Heart right ventricle (tissue), 16 donors: ENCODE measurements at regions of chr6 and their contacts with region 1.

Region 1: DNA sequence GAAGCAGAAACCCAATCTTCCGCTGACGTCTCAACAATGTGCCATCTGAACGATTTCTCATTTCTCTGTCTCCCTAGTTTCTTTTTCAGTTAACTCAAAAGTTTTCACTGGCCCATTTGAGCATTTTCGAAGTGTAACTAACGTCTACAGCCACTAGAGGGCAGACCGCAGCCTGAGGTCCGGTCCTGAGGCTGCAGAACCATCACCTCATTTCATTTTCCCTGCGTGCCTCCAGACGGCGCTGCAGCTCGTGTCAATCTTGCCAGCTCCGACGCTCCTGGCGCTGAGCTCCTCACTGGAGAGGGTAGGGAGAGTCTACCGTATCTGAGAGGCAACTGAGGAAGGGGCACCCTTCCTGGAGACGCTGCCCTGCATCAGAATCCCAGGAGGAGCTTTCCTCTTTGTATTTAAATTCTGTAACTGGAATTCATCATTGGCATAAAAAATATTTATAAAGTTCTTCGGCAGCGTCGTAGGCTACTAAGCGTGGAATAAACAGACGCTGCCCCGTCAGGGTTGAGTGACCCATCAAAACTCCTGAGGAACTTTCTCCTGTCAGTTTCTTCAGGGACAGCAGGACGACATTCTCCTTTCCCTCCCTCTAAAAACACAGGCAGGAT is 28.5 kb upstream of the DTNBP1 start:
- DNase-seq: peak; percentile 82 to 83
- ATAC-seq: peak; percentile 95 to 99 (median 98)
- H3K4me3 ChIP-seq: peak overlapping the region in 8 of 10 donors; percentile 0 to 43 (median 34)
- H3K27ac ChIP-seq: peak overlapping the region in 3 of 10 donors; percentile 13 to 67 (median 46)
- H3K4me1 ChIP-seq: peaks cover 0 to 19% (median 9%) of the 10 kb centered on the region in 9 donors
- H3K27me3 ChIP-seq: no peaks in the 10 kb centered on the region
- CTCF ChIP-seq: peak; percentile 98 to 100 (median 100)

Region 2: GRCh38 chr6:15823838-15824414 is 132.6 kb after region 1 on chr6:
- intact Hi-C with region 1: loop called in 1 of 10 experiments (anchors 10 kb)
- DNase-seq: no peak
- ATAC-seq: no peak
- H3K4me3 ChIP-seq: no peak overlapping the region
- H3K27ac ChIP-seq: no peak overlapping the region
- H3K4me1 ChIP-seq: peaks cover 0 to 16% (median 6%) of the 10 kb centered on the region in 9 donors
- H3K27me3 ChIP-seq: no peaks in the 10 kb centered on the region
- CTCF ChIP-seq: no peak

Region 3: DNA sequence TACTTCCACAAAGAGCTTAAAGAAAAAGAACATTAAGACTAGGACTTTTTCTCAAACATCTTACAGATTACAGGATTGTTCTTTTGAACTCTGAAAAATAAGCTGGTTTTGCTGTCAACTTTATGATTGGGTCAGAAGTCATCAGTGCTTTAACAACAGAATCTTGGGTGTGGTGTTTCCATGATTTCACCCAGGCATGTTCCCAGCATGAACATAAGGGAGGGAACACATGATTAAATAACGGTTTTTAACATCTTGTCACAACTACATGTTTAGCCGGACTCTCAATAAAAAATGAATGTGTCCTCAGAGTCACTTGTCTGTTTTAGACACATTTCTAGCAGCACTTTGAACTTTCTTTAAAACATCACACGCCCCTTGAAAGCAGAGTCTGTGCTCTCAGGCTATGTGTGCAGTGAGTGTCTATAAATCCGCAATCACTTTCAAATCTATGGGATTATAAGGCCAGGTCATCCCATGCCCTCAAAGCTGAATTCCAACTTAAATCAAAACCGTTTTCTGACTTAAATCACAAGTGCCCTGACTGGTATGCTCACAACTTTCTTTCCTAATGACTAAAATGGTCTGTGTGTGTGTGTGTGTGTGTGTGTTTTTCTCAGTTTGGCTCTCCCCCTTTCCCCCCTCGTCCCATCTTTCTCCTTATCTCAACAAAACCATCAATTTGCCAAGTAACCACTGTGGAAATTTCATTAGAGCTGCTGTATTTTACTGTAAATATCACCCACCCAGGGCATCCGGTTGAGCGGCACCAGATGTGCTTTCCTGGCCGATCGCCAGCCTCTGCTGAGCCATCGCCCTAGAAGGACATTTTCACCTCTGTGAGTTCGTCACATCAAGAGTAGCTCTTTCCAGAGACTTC is 188.3 kb after region 1 on chr6:
- intact Hi-C with region 1: loop called in 1 of 10 experiments (anchors 10 kb)
- DNase-seq: peak; percentile 76 to 81
- ATAC-seq: peak; percentile 70 to 91 (median 83)
- H3K4me3 ChIP-seq: no peak overlapping the region
- H3K27ac ChIP-seq: peak overlapping the region in 5 of 10 donors; percentile 18 to 40 (median 32)
- H3K4me1 ChIP-seq: peaks cover 3 to 33% (median 12%) of the 10 kb centered on the region in 9 donors
- H3K27me3 ChIP-seq: no peaks in the 10 kb centered on the region
- CTCF ChIP-seq: no peak

Region 4: GRCh38 chr6:16183187-16183664 is 491.9 kb after region 1 on chr6:
- intact Hi-C with region 1: loop called (anchors 1 to 5 kb)
- DNase-seq: no peak
- ATAC-seq: peak in 7 of 8 donors; percentile 38 to 62 (median 54)
- H3K4me3 ChIP-seq: no peak overlapping the region
- H3K27ac ChIP-seq: peak overlapping the region in 2 of 10 donors; percentile 16 to 51
- H3K4me1 ChIP-seq: peaks cover 0 to 17% (median 4%) of the 10 kb centered on the region in 9 donors
- H3K27me3 ChIP-seq: no peaks in the 10 kb centered on the region
- CTCF ChIP-seq: peak; percentile 63 to 85 (median 78)

Region 5: GRCh38 chr6:16206595-16207037 is 515.3 kb after region 1 on chr6:
- intact Hi-C with region 1: loop called in 5 of 10 experiments (anchors 1 to 10 kb)
- DNase-seq: peak in 1 of 2 donors; percentile 75
- ATAC-seq: peak; percentile 52 to 94 (median 80)
- H3K4me3 ChIP-seq: no peak overlapping the region
- H3K27ac ChIP-seq: peak overlapping the region in 2 of 10 donors; percentile 17 to 64
- H3K4me1 ChIP-seq: peaks cover 0 to 16% (median 8%) of the 10 kb centered on the region in 9 donors
- H3K27me3 ChIP-seq: peaks cover 0 to 7% (median 0%) of the 10 kb centered on the region in 7 donors
- CTCF ChIP-seq: peak; percentile 86 to 99 (median 97)